ENCODE measurements at regions of chr7 and their contacts with region 1.

Region 1: DNA sequence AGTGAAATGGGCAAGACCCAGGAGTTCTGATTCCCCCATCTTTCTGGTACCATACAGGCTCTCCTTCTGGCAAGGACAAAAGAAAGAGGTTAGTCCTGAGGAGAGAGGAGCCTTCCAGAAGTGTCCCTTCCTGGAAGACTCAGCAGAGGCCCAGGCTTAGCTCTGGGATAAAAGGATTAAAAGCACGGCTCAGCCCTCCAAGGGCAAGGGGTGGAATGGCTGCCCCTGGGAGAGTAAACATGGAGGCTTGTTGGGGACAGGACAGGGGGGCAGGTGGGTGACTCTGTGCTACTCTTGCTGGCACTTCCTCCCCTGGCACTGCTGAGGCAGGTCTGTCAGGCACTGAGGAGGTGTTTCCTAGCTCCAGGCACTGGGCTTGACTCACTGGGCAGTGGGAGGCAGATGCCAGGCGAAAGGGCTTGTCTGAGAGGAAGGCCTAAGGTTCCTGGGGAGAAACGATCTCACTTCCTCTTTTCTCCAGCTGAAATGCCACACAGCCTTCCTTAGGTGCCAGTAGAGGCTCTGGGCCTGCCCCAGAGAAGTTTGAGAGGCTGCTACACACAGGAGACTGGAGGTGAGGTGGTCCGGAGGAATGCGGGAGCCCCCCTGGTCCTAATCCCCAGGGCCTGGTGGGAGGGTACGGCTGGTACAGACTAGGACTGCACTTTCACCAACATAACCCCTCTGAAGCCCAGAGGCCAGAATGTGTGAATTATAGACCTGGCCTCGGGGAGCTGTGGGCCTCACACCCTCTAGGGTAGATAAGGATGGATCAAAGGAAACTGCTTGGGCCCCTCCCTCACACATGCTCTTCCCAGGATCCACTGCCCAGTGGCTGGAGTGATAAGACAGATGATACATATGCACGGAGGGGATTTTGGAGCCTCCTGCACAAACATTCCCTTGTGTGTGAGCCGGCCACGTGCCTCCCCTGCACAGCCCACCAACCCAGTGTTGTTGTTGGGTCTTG is 63.2 kb upstream of the PODXL start:
- DNase-seq: no peak
- ATAC-seq: no peak
- H3K4me3 Mint-ChIP-seq: no peak overlapping the region
- H3K27ac Mint-ChIP-seq: 0 out of 2 replicates have a peak overlapping the region, but pooled peaks have one; percentile 76
- H3K4me1 Mint-ChIP-seq: peaks cover 59% of the 10 kb centered on the region
- H3K27me3 Mint-ChIP-seq: peaks cover 14% of the 10 kb centered on the region
- CTCF ChIP-seq: no peak

Region 2: GRCh38 chr7:131604841-131605279 is 14.8 kb before region 1 on chr7:
- CTCF ChIA-PET with region 1: interaction called, 6 read pairs
- POLR2A ChIA-PET with region 1: interaction called, 12 read pairs
- DNase-seq: no peak
- ATAC-seq: peak; percentile 43
- H3K4me3 Mint-ChIP-seq: peak overlapping the region; percentile 59
- H3K27ac Mint-ChIP-seq: peak overlapping the region; percentile 100
- H3K4me1 Mint-ChIP-seq: peaks cover 81% of the 10 kb centered on the region
- H3K27me3 Mint-ChIP-seq: no peaks in the 10 kb centered on the region; the same call in 1 of the 2 replicates
- CTCF ChIP-seq: no peak